ENCODE measurements at regions of chr10 and their contacts with region 1.

Region 1: DNA sequence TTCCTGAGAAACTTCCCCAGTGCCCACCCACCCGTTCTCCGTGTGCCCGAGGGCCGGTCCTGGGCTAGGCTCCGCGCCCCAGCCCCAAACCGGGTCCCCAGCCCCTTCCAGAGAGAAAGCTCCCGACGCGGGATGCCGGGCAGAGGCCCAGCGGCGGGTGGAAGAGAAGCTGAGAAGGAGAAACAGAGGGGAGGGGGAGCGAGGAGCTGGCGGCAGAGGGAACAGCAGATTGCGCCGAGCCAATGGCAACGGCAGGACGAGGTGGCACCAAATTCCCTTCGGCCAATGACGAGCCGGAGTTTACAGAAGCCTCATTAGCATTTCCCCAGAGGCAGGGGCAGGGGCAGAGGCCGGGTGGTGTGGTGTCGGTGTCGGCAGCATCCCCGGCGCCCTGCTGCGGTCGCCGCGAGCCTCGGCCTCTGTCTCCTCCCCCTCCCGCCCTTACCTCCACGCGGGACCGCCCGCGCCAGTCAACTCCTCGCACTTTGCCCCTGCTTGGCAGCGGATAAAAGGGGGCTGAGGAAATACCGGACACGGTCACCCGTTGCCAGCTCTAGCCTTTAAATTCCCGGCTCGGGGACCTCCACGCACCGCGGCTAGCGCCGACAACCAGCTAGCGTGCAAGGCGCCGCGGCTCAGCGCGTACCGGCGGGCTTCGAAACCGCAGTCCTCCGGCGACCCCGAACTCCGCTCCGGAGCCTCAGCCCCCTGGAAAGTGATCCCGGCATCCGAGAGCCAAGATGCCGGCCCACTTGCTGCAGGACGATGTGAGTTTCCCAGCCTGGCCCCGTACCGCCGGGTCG is at the start of gene SCD:
- DNase-seq: peak; percentile 93
- H3K4me3 Mint-ChIP-seq: peak within 1 kb of the TSS; percentile 96
- H3K27ac Mint-ChIP-seq: peak within 1 kb of the TSS; percentile 74
- H3K4me1 Mint-ChIP-seq: peaks cover 65% of the 10 kb centered on the region
- H3K27me3 Mint-ChIP-seq: no peaks in the 10 kb centered on the region
- total RNA-seq, gene SCD: 198 to 202 TPM

Region 2: DNA sequence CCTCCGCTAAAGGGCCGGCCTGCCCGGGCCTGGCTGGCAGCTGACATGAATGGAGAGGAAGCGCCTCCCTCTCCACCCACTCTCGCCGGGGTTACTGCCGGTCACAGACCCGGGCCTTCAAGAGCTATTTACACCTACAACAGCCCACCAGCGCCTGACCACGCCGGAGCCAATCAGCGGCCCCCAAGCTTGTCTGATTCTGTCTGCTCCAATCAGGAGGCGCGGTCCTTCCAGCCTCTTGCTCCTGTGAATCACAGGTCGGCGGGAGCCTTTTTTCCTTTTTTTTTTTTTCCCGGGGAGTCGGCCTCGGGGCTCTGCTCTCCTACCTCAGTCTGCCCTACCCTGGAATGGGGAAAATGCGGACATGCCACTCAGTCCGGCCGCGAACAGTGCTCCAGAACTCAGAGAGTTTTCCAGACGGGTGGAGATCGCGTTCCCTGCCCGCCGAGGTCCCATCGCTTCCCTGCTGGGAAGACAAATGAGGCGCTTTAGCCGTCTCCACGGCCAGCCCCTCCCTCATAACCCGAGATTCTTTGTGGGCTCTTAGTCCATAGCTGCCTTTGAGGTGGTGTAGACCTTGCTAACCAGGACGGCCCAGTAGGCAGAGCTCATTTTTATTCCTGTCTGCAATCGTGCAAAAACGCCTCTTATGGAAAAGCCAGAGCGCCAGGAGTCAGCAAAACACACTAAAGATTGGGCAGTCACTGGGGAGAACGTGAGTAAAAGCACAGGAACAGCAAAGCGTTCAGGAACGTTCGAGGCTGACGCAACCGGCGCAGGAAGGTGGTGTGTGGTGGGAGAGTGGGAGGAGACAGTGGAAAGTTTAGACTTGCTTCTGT is 26.6 kb after region 1 on chr10:
- CTCF ChIA-PET with region 1: interaction called, 28 read pairs
- POLR2A ChIA-PET with region 1: interaction called, 105 read pairs
- DNase-seq: peak; percentile 96
- H3K4me3 Mint-ChIP-seq: no peak overlapping the region
- H3K27ac Mint-ChIP-seq: no peak overlapping the region
- H3K4me1 Mint-ChIP-seq: peaks cover 39% of the 10 kb centered on the region
- H3K27me3 Mint-ChIP-seq: no peaks in the 10 kb centered on the region

Region 3: GRCh38 chr10:100433253-100434240 is 86.6 kb after region 1 on chr10:
- CTCF ChIA-PET with region 1: interaction called, 220 read pairs
- POLR2A ChIA-PET with region 1: interaction called, 3 read pairs
- DNase-seq: peak; percentile 97
- H3K4me3 Mint-ChIP-seq: no peak overlapping the region
- H3K27ac Mint-ChIP-seq: no peak overlapping the region
- H3K4me1 Mint-ChIP-seq: peaks cover 6% of the 10 kb centered on the region
- H3K27me3 Mint-ChIP-seq: no peaks in the 10 kb centered on the region